PC-9 (cell line): ENCODE measurements at regions of chr3 and their contacts with region 1.

Region 1: DNA sequence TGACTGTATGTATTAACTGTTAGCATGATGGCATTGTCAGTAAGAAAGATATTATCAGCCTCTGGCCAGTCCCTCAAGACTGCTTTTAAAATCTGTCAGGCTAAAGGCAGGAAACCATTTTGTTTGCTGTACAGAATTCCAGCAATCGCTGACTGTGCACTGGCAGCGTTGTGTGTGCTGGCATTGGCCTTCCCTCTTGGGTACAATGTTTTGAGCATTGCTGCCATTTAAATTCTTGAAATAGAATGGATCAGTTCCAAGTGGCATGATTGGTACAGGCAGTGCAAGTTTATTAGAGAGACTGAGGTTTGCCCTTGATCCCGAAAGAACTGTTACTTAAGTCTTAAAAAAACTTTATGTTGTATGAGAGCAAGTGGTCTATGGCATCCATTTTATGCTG is 788.7 kb downstream of the OTOL1 start:
- DNase-seq: no peak
- H3K4me3 ChIP-seq: no peak overlapping the region
- H3K27ac ChIP-seq: no peak overlapping the region
- H3K4me1 ChIP-seq: no peaks in the 10 kb centered on the region
- H3K27me3 ChIP-seq: no peaks in the 10 kb centered on the region
- CTCF ChIP-seq: no peak

Region 2: DNA sequence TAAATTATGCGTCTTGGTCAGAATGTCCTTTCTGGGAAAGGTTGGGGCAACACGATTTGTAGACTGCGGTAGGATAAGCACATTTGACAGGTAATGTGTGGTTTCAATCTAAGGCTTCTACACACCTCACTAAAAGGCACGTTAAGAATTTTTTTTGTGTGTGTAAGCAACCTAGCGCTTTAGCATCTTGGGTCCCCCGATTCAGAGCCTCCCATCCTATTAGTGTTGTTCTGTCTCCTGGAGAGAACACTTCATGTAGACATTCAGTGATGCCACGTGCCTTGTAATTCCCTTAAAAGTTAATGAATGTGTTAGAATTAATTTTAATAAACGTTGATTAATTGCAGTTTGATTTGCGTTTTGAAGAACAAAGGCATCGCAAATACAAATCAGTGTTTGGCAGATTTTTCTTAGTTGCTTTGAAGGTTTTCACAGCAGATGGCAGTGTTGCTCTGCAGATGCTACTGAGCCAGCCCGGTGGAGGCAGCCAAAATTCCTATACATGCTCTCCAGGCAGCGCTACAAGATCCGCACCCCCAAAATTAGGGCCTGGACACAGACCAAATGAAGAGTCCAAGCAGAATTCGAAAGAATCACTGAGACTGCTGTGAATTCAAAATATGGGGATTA is 725.1 kb before region 1 on chr3:
- CTCF ChIA-PET with region 1: no interaction called
- POLR2A ChIA-PET with region 1: no interaction called
- intact Hi-C with region 1: loop called (anchors 10 kb)
- DNase-seq: peak in 1 of 2 experiments; percentile 46
- H3K4me3 ChIP-seq: no peak overlapping the region
- H3K27ac ChIP-seq: no peak overlapping the region
- H3K4me1 ChIP-seq: no peaks in the 10 kb centered on the region
- H3K27me3 ChIP-seq: no peaks in the 10 kb centered on the region
- CTCF ChIP-seq: peak; percentile 61

Region 3: GRCh38 chr3:161754420-161755053 is 530.7 kb before region 1 on chr3:
- CTCF ChIA-PET with region 1: no interaction called
- POLR2A ChIA-PET with region 1: no interaction called
- intact Hi-C with region 1: no loop called
- DNase-seq: no peak
- H3K4me3 ChIP-seq: no peak overlapping the region
- H3K27ac ChIP-seq: no peak overlapping the region
- H3K4me1 ChIP-seq: no peaks in the 10 kb centered on the region
- H3K27me3 ChIP-seq: no peaks in the 10 kb centered on the region
- CTCF ChIP-seq: no peak

Region 4: GRCh38 chr3:162269636-162270458 is 15.4 kb before region 1 on chr3:
- CTCF ChIA-PET with region 1: no interaction called
- POLR2A ChIA-PET with region 1: no interaction called
- intact Hi-C with region 1: no loop called
- DNase-seq: no peak
- H3K4me3 ChIP-seq: no peak overlapping the region
- H3K27ac ChIP-seq: no peak overlapping the region
- H3K4me1 ChIP-seq: no peaks in the 10 kb centered on the region
- H3K27me3 ChIP-seq: no peaks in the 10 kb centered on the region
- CTCF ChIP-seq: no peak

Region 5: GRCh38 chr3:163043074-163043473 is 757.8 kb after region 1 on chr3:
- CTCF ChIA-PET with region 1: no interaction called
- POLR2A ChIA-PET with region 1: no interaction called
- intact Hi-C with region 1: loop called (anchors 10 kb)
- DNase-seq: no peak
- H3K4me3 ChIP-seq: no peak overlapping the region
- H3K27ac ChIP-seq: no peak overlapping the region
- H3K4me1 ChIP-seq: no peaks in the 10 kb centered on the region
- H3K27me3 ChIP-seq: no peaks in the 10 kb centered on the region
- CTCF ChIP-seq: peak; percentile 51